Breast epithelium (tissue), 4 donors: ENCODE measurements at regions of chr12 and their contacts with region 1.

Region 1: GRCh38 chr12:128671528-128672042 is 152.2 kb downstream of the SLC15A4 start:
- DNase-seq: no peak
- H3K4me3 ChIP-seq: no peak overlapping the region
- H3K27ac ChIP-seq: no peak overlapping the region
- H3K4me1 ChIP-seq: no peaks in the 10 kb centered on the region
- H3K27me3 ChIP-seq: no peaks in the 10 kb centered on the region
- CTCF ChIP-seq: no peak
- POLR2A ChIP-seq: no peak

Region 2: GRCh38 chr12:128685903-128686475 is 14.4 kb after region 1 on chr12:
- intact Hi-C with region 1: loop called (anchors 1 kb)
- DNase-seq: no peak
- H3K4me3 ChIP-seq: no peak overlapping the region
- H3K27ac ChIP-seq: no peak overlapping the region
- H3K4me1 ChIP-seq: no peaks in the 10 kb centered on the region
- H3K27me3 ChIP-seq: no peaks in the 10 kb centered on the region
- CTCF ChIP-seq: no peak
- POLR2A ChIP-seq: no peak